ENCODE measurements at regions of chr7 and their contacts with region 1.

Region 1: GRCh38 chr7:16114633-16115032 is 306.7 kb downstream of the CRPPA start:
- DNase-seq: no peak
- H3K4me3 Mint-ChIP-seq: no peak overlapping the region
- H3K27ac Mint-ChIP-seq: no peak overlapping the region
- H3K4me1 Mint-ChIP-seq: peaks cover 6% of the 10 kb centered on the region
- H3K27me3 Mint-ChIP-seq: no peaks in the 10 kb centered on the region

Region 2: DNA sequence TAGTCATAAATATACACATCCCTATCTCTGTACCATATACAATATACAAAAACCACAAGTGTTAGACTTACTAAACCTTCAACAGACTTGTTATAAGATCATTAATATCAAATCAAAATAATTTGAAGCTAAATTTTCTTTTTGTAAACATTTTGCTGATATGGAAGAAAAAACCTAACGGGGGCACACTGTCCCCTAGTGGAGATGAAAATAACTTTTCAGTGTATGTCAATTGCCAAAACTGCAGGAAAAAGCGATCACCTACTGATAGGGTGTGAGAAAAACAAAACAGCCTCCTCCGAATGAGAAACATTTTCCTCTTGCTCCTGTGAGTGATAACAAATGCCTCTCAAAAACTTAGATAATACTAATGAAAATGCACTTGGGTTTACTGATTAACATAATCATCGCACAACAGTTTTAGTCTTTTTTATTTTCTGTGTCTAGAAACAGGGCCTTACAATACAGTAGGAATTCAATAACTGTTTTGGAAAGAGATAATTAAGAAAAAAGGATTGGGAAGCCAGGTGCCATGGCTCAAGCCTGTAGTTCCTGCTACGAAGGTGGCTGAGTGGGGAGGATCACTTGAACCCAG is 16.0 kb before region 1 on chr7:
- intact Hi-C with region 1: no loop called
- DNase-seq: no peak
- H3K4me3 Mint-ChIP-seq: no peak overlapping the region
- H3K27ac Mint-ChIP-seq: no peak overlapping the region
- H3K4me1 Mint-ChIP-seq: no peaks in the 10 kb centered on the region
- H3K27me3 Mint-ChIP-seq: no peaks in the 10 kb centered on the region

Region 3: GRCh38 chr7:16559497-16560179 is 445.0 kb after region 1 on chr7:
- intact Hi-C with region 1: loop called (anchors 1 kb)
- DNase-seq: no peak
- H3K4me3 Mint-ChIP-seq: no peak overlapping the region
- H3K27ac Mint-ChIP-seq: no peak overlapping the region
- H3K4me1 Mint-ChIP-seq: peaks cover 16% of the 10 kb centered on the region
- H3K27me3 Mint-ChIP-seq: no peaks in the 10 kb centered on the region